ENCODE measurements at regions of chr9 and their contacts with region 1.

Region 1: DNA sequence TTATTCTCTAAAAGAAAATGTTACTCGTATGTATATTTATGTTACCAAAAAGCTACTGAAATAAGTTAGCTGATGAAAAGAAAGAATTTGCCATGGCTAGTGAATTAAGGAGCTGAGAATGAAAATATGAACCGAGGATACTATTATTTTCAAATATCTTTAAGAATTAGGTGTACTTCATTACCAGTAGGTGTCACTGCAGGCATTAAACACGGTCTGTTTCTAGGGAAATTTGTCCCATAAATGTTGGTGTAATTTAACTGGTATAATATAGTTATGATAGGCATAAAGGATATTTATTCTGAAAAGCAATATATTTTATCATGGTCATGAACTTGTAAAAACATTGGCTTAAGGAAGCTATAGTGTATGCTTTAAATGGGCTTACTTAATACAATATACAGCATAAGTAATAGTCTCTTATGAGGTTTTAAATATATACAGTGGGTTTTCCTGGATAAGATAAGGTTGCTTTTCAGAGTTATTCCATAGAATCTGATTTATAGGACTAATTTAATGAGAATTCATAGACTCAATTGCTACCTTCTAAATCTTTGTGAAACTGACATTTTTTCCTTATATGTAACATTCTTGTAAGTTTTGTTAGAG is 72.4 kb upstream of the MPDZ start:
- DNase-seq: peak; percentile 59
- ATAC-seq: peak; percentile 70
- H3K4me3 ChIP-seq: no peak overlapping the region
- H3K27ac ChIP-seq: no peak overlapping the region
- H3K4me1 ChIP-seq: peaks cover 6% of the 10 kb centered on the region; the same call in 1 of the 2 replicates
- H3K27me3 ChIP-seq: no peaks in the 10 kb centered on the region
- CTCF ChIP-seq: peak; percentile 76

Region 2: GRCh38 chr9:13033959-13034693 is 317.8 kb before region 1 on chr9:
- CTCF ChIA-PET with region 1: no interaction called
- POLR2A ChIA-PET with region 1: no interaction called
- intact Hi-C with region 1: loop called (anchors 10 kb)
- DNase-seq: peak; percentile 84
- ATAC-seq: peak; percentile 81
- H3K4me3 ChIP-seq: peak overlapping the region; percentile 65
- H3K27ac ChIP-seq: peak overlapping the region; percentile 31; the same call in 1 of the 2 replicates
- H3K4me1 ChIP-seq: peaks cover 26% of the 10 kb centered on the region
- H3K27me3 ChIP-seq: no peaks in the 10 kb centered on the region
- CTCF ChIP-seq: peak; percentile 79

Region 3: GRCh38 chr9:13128224-13128860 is 223.5 kb before region 1 on chr9:
- CTCF ChIA-PET with region 1: no interaction called
- POLR2A ChIA-PET with region 1: no interaction called
- intact Hi-C with region 1: no loop called
- DNase-seq: no peak
- ATAC-seq: no peak
- H3K4me3 ChIP-seq: no peak overlapping the region
- H3K27ac ChIP-seq: no peak overlapping the region
- H3K4me1 ChIP-seq: no peaks in the 10 kb centered on the region
- H3K27me3 ChIP-seq: no peaks in the 10 kb centered on the region
- CTCF ChIP-seq: no peak

Region 4: GRCh38 chr9:13410566-13411031 is 58.7 kb after region 1 on chr9:
- CTCF ChIA-PET with region 1: no interaction called
- POLR2A ChIA-PET with region 1: no interaction called
- intact Hi-C with region 1: no loop called
- DNase-seq: peak; percentile 85
- ATAC-seq: peak; percentile 80
- H3K4me3 ChIP-seq: no peak overlapping the region
- H3K27ac ChIP-seq: no peak overlapping the region
- H3K4me1 ChIP-seq: no peaks in the 10 kb centered on the region; the same call in 1 of the 2 replicates
- H3K27me3 ChIP-seq: no peaks in the 10 kb centered on the region
- CTCF ChIP-seq: no peak

Region 5: GRCh38 chr9:13688994-13689600 is 337.2 kb after region 1 on chr9:
- CTCF ChIA-PET with region 1: no interaction called
- POLR2A ChIA-PET with region 1: no interaction called
- intact Hi-C with region 1: loop called (anchors 2 kb)
- DNase-seq: peak; percentile 32
- ATAC-seq: no peak
- H3K4me3 ChIP-seq: no peak overlapping the region
- H3K27ac ChIP-seq: peak overlapping the region; percentile 76
- H3K4me1 ChIP-seq: peaks cover 32% of the 10 kb centered on the region
- H3K27me3 ChIP-seq: no peaks in the 10 kb centered on the region
- CTCF ChIP-seq: peak; percentile 65

Region 6: DNA sequence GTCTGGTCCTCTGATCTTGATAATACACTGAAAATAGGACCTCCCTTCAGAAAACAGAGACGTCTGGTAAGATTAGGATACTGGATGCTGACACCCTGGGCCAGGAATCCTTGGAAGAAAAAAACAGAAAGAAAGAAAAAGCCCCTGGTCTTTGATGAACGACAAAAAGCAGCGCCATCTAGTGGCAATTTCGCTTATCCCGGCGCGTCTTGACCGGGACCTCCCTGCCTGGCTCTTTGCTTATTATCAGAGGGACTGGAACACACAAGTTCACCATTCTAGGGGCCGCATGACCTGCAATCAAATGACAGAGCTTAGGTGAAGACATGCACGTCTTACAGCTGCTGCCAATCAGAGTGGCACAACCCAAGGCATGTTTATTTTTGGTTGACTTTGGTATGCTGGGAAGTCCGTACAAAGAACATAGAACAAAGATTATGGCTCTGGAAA is 1076.9 kb after region 1 on chr9:
- CTCF ChIA-PET with region 1: no interaction called
- POLR2A ChIA-PET with region 1: no interaction called
- intact Hi-C with region 1: loop called (anchors 5 kb)
- DNase-seq: peak; percentile 73
- ATAC-seq: peak; percentile 63
- H3K4me3 ChIP-seq: no peak overlapping the region
- H3K27ac ChIP-seq: no peak overlapping the region
- H3K4me1 ChIP-seq: peaks cover 19% of the 10 kb centered on the region
- H3K27me3 ChIP-seq: no peaks in the 10 kb centered on the region
- CTCF ChIP-seq: peak; percentile 77